IMR-90 (cell line): ENCODE measurements at regions of chr5 and their contacts with region 1.

Region 1: DNA sequence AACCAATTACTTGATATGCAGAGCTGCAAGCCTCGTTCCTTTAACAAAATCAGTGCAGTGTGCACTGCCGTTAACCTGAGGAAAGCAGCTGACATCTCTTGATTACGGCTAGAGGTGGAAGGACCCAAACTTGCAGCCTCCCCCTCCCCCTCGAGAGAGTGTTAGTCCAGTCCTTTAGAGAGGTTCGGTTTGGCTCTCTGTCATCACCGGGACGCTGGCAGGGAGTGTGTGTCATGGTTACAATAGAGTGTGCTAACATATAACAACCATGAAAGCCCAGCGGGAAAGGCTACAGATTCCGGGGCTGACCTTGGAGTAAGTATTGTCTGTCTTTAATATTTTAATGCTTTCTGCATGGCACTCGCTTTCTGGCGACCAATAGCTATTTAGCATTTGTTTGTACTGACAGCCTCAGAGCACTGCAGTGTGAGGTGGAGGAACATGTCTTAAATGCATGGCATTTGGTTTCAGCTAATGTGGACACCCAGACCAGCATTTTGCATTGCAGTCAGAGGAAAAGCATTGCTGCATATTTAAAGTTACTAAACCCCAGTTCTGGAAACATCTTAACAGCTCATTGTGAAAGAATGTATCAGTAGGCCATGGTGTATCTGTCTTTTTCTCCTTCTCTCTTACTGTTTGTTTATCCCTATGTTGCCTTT is 237.5 kb downstream of the CD180 start:
- DNase-seq: peak; percentile 80
- ATAC-seq: peak; percentile 62
- H3K4me3 ChIP-seq: peak overlapping the region; percentile 51
- H3K27ac ChIP-seq: peak overlapping the region; percentile 81
- H3K4me1 ChIP-seq: peaks cover 8% of the 10 kb centered on the region
- H3K27me3 ChIP-seq: no peaks in the 10 kb centered on the region
- CTCF ChIP-seq: no peak
- POLR2A ChIP-seq: no peak
- RAD21 ChIP-seq: no peak

Region 2: GRCh38 chr5:66828548-66829357 is 130.4 kb before region 1 on chr5:
- CTCF ChIA-PET with region 1: no interaction called
- POLR2A ChIA-PET with region 1: no interaction called
- dilution Hi-C with region 1: no loop called
- in situ Hi-C with region 1: no loop called
- intact Hi-C with region 1: loop called (anchors 10 kb)
- DNase-seq: peak; percentile 71
- ATAC-seq: peak; percentile 98
- H3K4me3 ChIP-seq: peak overlapping the region; percentile 49
- H3K27ac ChIP-seq: no peak overlapping the region
- H3K4me1 ChIP-seq: no peaks in the 10 kb centered on the region; the same call in 1 of the 2 replicates
- H3K27me3 ChIP-seq: peaks cover 20% of the 10 kb centered on the region
- CTCF ChIP-seq: no peak
- POLR2A ChIP-seq: no peak
- RAD21 ChIP-seq: no peak

Region 3: GRCh38 chr5:66987949-66988838 is 29.1 kb after region 1 on chr5:
- CTCF ChIA-PET with region 1: interaction called, 5 read pairs
- POLR2A ChIA-PET with region 1: no interaction called
- dilution Hi-C with region 1: no loop called
- in situ Hi-C with region 1: no loop called
- intact Hi-C with region 1: loop called (anchors 1 kb)
- DNase-seq: peak; percentile 26
- ATAC-seq: peak; percentile 67
- H3K4me3 ChIP-seq: no peak overlapping the region
- H3K27ac ChIP-seq: no peak overlapping the region
- H3K4me1 ChIP-seq: peaks cover 6% of the 10 kb centered on the region
- H3K27me3 ChIP-seq: no peaks in the 10 kb centered on the region
- CTCF ChIP-seq: peak; percentile 70
- POLR2A ChIP-seq: no peak
- RAD21 ChIP-seq: peak; percentile 65

Region 4: DNA sequence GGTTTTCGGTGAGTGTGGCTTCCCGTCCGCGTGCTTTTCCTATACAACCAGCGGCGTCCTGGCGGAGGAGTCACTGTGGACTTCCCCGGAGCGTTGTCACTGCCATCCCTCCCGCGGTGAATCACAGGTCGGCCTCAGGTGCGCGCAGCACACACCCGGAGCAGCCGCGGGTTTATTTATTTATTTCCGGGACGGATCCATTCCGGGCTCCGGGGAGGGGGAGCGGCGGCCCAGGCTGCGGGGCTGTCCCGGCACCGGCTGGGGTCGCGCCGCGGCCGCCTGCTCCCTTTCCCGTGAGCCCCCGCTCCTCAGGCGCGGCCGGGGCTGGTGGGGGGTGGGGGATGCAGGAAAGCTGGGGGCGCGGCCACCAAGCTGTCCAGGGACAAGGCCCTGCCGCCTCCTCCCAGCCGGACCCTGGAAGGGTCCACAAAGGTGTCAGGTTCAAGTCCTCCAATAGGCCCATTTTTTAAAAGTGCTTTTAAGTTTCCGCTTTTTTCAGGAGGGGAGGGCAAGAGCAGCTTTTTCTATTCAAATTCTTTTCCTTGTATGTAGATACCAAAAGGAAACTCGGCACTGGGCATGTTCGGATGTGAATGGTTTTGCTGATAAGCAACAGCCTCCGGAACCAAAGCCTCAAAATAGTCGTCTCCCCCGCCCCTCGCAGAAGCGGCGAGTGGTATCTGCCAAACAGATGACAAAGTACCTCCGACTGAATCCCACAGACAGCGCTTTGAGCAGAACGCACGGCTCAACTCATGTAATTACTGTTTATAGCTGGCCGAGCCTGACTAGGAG is 45.0 kb after region 1 on chr5:
- CTCF ChIA-PET with region 1: no interaction called
- POLR2A ChIA-PET with region 1: no interaction called
- dilution Hi-C with region 1: no loop called
- in situ Hi-C with region 1: no loop called
- intact Hi-C with region 1: loop called (anchors 2 kb)
- DNase-seq: peak; percentile 88
- ATAC-seq: peak; percentile 84
- H3K4me3 ChIP-seq: peak overlapping the region; percentile 54
- H3K27ac ChIP-seq: peak overlapping the region; percentile 52
- H3K4me1 ChIP-seq: peaks cover 6% of the 10 kb centered on the region
- H3K27me3 ChIP-seq: no peaks in the 10 kb centered on the region
- CTCF ChIP-seq: no peak
- POLR2A ChIP-seq: peak; percentile 79; the same call in 1 of the 2 replicates
- RAD21 ChIP-seq: peak; percentile 14; the same call in 1 of the 2 replicates